ENCODE measurements at regions of chr21 and their contacts with region 1.

Region 1: DNA sequence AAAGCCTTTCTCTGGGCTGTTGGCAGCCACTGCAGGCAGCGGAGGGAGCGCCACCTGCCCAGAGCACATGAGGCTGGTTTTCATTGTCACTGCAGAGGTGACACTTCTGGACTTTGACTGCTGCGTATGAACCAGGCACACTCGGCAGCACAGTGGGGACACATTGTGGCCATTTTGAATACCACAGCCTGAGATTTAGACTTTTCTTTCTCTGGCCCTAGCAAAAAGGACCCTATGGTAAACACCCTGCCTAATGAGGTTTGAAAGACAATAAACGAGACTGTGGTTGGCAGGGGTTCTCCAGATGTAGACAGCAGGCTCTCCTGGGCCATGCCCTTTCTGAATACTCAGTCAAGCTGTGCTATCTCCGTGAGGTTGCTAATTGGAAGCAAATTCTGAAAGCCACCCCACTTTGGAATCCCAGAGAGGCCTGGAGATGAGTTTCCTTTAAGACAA is 12.0 kb upstream of the KCNE2 start:
- DNase-seq: peak in 2 of 5 donors; percentile 2 to 15
- H3K4me3 ChIP-seq: no peak overlapping the region
- H3K4me3 Mint-ChIP-seq: no peak overlapping the region
- H3K27ac ChIP-seq: no peak overlapping the region
- H3K27ac Mint-ChIP-seq: no peak overlapping the region
- H3K4me1 ChIP-seq: no peaks in the 10 kb centered on the region
- H3K4me1 Mint-ChIP-seq: peaks cover 4 to 6% (median 5%) of the 10 kb centered on the region in 4 donors
- H3K27me3 ChIP-seq: no peaks in the 10 kb centered on the region
- H3K27me3 Mint-ChIP-seq: peaks cover 19 to 20% of the 10 kb centered on the region in 2 donors

Region 2: DNA sequence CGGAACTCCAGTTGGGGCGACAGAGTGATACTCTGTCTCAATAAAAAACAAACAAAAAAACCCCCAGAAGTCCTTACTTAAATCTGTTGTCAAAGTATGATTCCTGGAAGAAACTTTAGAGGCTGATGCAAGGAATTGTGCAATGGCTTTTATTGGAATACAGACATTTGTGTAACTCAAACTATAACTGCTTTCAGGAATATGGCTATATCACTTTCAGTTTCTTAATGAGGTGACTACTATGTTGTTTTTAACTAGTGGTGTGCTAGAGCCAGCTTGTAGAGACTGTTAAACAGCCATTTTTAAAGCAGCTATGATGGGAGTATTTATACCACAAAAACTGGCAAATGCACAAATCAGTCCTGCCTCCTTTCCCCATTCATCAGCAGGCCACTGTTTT is 837.6 kb before region 1 on chr21:
- CTCF ChIA-PET with region 1: no interaction called
- POLR2A ChIA-PET with region 1: no interaction called
- intact Hi-C with region 1: no loop called
- DNase-seq: no peak
- H3K4me3 ChIP-seq: no peak overlapping the region
- H3K4me3 Mint-ChIP-seq: no peak overlapping the region
- H3K27ac ChIP-seq: no peak overlapping the region
- H3K27ac Mint-ChIP-seq: peak overlapping the region in 1 of 7 donors; percentile 38
- H3K4me1 ChIP-seq: no peaks in the 10 kb centered on the region
- H3K4me1 Mint-ChIP-seq: peaks cover 0 to 3% (median 0%) of the 10 kb centered on the region in 4 donors
- H3K27me3 ChIP-seq: no peaks in the 10 kb centered on the region
- H3K27me3 Mint-ChIP-seq: no peaks in the 10 kb centered on the region

Region 3: GRCh38 chr21:33940164-33940880 is 411.5 kb before region 1 on chr21:
- CTCF ChIA-PET with region 1: interaction called, 13 read pairs
- POLR2A ChIA-PET with region 1: no interaction called
- intact Hi-C with region 1: no loop called
- DNase-seq: no peak
- H3K4me3 ChIP-seq: no peak overlapping the region
- H3K4me3 Mint-ChIP-seq: peak overlapping the region in 6 of 8 donors; percentile 11 to 60 (median 18)
- H3K27ac ChIP-seq: no peak overlapping the region
- H3K27ac Mint-ChIP-seq: peak overlapping the region; percentile 54 to 89 (median 82)
- H3K4me1 ChIP-seq: peaks cover 70% of the 10 kb centered on the region
- H3K4me1 Mint-ChIP-seq: peaks cover 41 to 81% (median 59%) of the 10 kb centered on the region in 4 donors
- H3K27me3 ChIP-seq: no peaks in the 10 kb centered on the region
- H3K27me3 Mint-ChIP-seq: no peaks in the 10 kb centered on the region

Region 4: DNA sequence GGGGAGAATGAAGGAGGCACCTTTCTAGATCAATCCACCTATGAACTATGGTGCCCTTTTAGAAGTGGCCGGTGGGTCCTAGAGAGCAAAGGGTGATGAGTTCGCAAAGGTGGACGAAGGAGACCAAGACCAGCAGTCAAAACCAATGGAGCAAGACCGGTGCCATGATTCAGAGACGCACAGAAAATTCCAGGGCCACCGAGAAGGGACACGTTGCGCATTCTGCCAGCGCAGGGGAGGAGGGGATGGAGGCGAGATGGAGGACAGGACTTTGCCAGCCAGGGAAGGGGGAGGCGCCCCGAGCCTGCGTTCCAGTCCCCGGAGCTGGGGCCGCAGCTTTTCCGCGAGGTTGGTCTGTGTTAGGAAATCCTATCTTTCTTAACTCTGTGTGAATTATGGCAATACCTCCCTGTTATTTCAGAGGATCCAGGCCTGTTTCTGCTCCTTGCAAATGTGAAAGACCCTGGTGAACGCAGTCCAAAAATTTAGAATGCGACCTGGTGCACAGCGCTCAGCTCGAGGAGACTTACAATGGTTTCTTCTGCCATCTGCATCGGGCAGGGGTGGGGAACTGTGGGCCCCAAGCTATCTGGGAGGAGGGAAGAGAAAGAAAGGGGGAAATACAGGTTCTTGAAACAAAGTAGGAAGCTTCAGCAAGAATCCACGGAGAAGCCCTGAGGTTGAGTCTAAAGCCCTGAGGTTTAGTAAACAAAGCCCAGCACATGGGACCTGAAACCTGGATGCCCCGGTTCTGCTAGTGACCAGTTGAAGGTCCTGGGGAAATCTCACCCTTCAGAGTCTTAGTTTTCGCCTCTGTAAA is 149.1 kb before region 1 on chr21:
- CTCF ChIA-PET with region 1: interaction called, 10 read pairs
- POLR2A ChIA-PET with region 1: interaction called, 4 read pairs
- intact Hi-C with region 1: no loop called
- DNase-seq: no peak
- H3K4me3 ChIP-seq: no peak overlapping the region
- H3K4me3 Mint-ChIP-seq: peak overlapping the region; percentile 46 to 87 (median 80)
- H3K27ac ChIP-seq: no peak overlapping the region
- H3K27ac Mint-ChIP-seq: peak overlapping the region in 2 of 7 donors; percentile 31 to 52
- H3K4me1 ChIP-seq: peaks cover 32% of the 10 kb centered on the region
- H3K4me1 Mint-ChIP-seq: peaks cover 32 to 50% (median 36%) of the 10 kb centered on the region in 4 donors
- H3K27me3 ChIP-seq: no peaks in the 10 kb centered on the region
- H3K27me3 Mint-ChIP-seq: no peaks in the 10 kb centered on the region

Region 5: DNA sequence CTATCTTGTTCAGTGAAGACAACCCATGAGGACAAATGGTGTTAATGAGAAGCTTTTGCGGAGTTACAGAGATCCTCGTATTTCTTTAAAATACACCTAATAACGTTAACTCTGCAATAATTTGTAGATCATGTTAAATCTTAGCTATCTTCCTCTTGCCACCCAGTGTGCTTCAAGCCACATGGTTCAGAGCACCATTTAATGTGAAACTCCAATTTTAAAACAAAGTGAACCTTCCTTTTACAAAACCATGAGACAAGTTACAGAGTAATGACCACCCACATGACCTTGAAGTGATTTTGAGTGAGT is 10.3 kb after region 1 on chr21:
- CTCF ChIA-PET with region 1: interaction called, 24 read pairs
- POLR2A ChIA-PET with region 1: no interaction called
- intact Hi-C with region 1: no loop called
- DNase-seq: no peak
- H3K4me3 ChIP-seq: no peak overlapping the region
- H3K4me3 Mint-ChIP-seq: no peak overlapping the region
- H3K27ac ChIP-seq: no peak overlapping the region
- H3K27ac Mint-ChIP-seq: no peak overlapping the region
- H3K4me1 ChIP-seq: no peaks in the 10 kb centered on the region
- H3K4me1 Mint-ChIP-seq: peaks cover 3 to 7% (median 5%) of the 10 kb centered on the region in 4 donors
- H3K27me3 ChIP-seq: peaks cover 6% of the 10 kb centered on the region
- H3K27me3 Mint-ChIP-seq: peaks cover 8 to 11% of the 10 kb centered on the region in 2 donors